K562 (cell line): ENCODE measurements at regions of chr12 and their contacts with region 1.

Region 1: GRCh38 chr12:110600254-110600653 is 13.7 kb upstream of the TCTN1 start:
- DNase-seq: peak in 2 of 4 experiments; percentile 46 to 56
- ATAC-seq: peak; percentile 59
- H3K4me3 ChIP-seq: no peak overlapping the region
- H3K27ac ChIP-seq: no peak overlapping the region
- H3K4me1 ChIP-seq: no peaks in the 10 kb centered on the region
- H3K27me3 ChIP-seq: no peaks in the 10 kb centered on the region
- CTCF ChIP-seq: peak; percentile 41 to 80 (median 43); a peak in 5 of 6 replicates
- EP300 ChIP-seq: no peak
- POLR2A ChIP-seq: no peak
- RAD21 ChIP-seq: peak; percentile 86 to 94

Region 2: DNA sequence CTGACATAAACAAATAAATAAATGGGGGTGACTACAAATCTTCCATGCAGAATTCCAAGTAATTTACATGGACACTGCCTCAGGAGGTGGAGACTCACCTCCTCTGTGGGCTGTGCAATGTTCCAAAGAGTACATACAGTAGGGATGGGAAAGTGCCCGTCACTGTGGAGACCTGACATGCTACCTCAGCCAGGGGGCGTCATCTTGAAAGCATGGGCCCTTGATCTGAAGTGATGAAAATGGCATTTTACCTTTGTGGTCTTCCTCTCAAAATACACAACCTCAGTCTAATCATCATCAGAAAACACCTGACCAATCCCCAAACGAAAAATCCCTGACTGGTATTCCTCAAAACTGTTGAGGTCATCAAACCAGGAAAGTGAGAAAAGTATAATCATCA is 245.2 kb before region 1 on chr12:
- CTCF ChIA-PET with region 1: no interaction called
- POLR2A ChIA-PET with region 1: no interaction called
- in situ Hi-C with region 1: no loop called
- intact Hi-C with region 1: loop called (anchors 5 kb)
- DNase-seq: peak; percentile 58 to 65 (median 61)
- ATAC-seq: peak; percentile 80
- H3K4me3 ChIP-seq: no peak overlapping the region
- H3K27ac ChIP-seq: no peak overlapping the region
- H3K4me1 ChIP-seq: peaks cover 8 to 21% of the 10 kb centered on the region in 2 experiments; a peak in 4 of 5 replicates
- H3K27me3 ChIP-seq: no peaks in the 10 kb centered on the region
- CTCF ChIP-seq: peak; percentile 61 to 71 (median 66)
- EP300 ChIP-seq: no peak
- POLR2A ChIP-seq: no peak
- RAD21 ChIP-seq: peak in 1 of 2 experiments; percentile 66; a peak in 3 of 4 replicates

Region 3: DNA sequence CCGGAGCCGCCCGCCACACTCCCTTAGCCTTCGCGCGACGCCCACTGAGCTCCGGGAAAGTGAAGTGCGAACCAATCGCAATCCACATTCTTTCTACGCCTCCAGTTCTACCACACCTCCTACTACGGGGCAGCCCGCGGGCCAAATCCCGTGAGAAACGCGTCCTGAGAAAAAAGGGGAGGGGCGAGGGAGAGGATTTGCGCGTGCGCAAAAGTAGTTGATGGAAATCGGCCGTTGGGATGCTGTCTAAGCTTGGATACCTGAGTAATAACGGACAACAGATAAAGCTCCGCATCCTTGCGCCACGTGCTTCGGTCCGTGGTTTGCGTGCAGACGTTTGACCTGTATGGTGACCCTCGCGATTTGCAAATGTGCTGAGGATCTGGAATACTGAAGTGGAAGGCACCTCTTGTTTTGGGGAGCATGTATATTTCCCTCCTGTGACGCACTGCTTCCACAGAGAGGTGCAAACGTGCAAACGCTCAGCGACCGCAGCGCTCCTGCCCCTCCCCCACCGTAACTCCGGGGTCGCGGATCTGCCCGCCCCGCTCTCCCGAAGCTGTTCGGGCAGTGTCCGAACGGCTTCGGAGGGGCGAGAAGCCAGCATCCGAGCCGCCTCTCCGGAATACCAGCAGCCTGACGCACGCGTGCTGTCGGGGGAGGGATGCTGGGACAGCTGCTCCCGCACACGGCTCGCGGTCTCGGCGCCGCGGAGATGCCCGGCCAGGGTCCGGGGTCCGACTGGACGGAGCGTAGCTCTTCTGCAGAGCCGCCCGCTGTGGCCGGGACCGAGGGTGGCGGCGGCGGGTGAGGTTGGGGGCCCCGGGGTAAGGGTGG is 131.8 kb before region 1 on chr12 and contains the starts of genes FAM216A and GPN3:
- CTCF ChIA-PET with region 1: interaction called, 15 read pairs
- POLR2A ChIA-PET with region 1: interaction called, 5 read pairs
- in situ Hi-C with region 1: loop called (anchors 5 kb)
- intact Hi-C with region 1: loop called (anchors 1 kb)
- DNase-seq: peak; percentile 89 to 99 (median 93)
- ATAC-seq: peak; percentile 89
- H3K4me3 ChIP-seq: peak within 1 kb of the TSS; percentile 59
- H3K27ac ChIP-seq: peak within 1 kb of the TSS; percentile 97
- H3K4me1 ChIP-seq: peaks cover 25 to 30% of the 10 kb centered on the region in 2 experiments; a peak in 4 of 5 replicates
- H3K27me3 ChIP-seq: no peaks in the 10 kb centered on the region
- CTCF ChIP-seq: no peak; a peak in 1 of 6 replicates
- EP300 ChIP-seq: peak; percentile 83
- POLR2A ChIP-seq: peak; percentile 79
- RAD21 ChIP-seq: no peak; a peak in 1 of 4 replicates
- polyA plus RNA-seq, gene FAM216A: 17.2 to 30.1 TPM
- polyA plus RNA-seq, gene GPN3: 105 to 123 TPM

Region 4: GRCh38 chr12:110555577-110556406 is 44.5 kb before region 1 on chr12:
- CTCF ChIA-PET with region 1: interaction called, 15 read pairs
- POLR2A ChIA-PET with region 1: no interaction called
- in situ Hi-C with region 1: no loop called
- intact Hi-C with region 1: loop called (anchors 1 kb)
- DNase-seq: no peak
- ATAC-seq: no peak
- H3K4me3 ChIP-seq: no peak overlapping the region
- H3K27ac ChIP-seq: no peak overlapping the region
- H3K4me1 ChIP-seq: peaks cover 0 to 12% of the 10 kb centered on the region in 2 experiments; a peak in 3 of 5 replicates
- H3K27me3 ChIP-seq: no peaks in the 10 kb centered on the region
- CTCF ChIP-seq: no peak
- EP300 ChIP-seq: no peak
- POLR2A ChIP-seq: no peak
- RAD21 ChIP-seq: no peak

Region 5: GRCh38 chr12:110698171-110698902 is 98.1 kb after region 1 on chr12:
- CTCF ChIA-PET with region 1: no interaction called
- POLR2A ChIA-PET with region 1: no interaction called
- in situ Hi-C with region 1: no loop called
- intact Hi-C with region 1: loop called (anchors 2 kb)
- DNase-seq: peak; percentile 77 to 92 (median 78)
- ATAC-seq: peak; percentile 97
- H3K4me3 ChIP-seq: peak overlapping the region; percentile 10; the same call in 1 of the 2 replicates
- H3K27ac ChIP-seq: peak overlapping the region; percentile 72
- H3K4me1 ChIP-seq: peaks cover 35 to 42% of the 10 kb centered on the region in 2 experiments
- H3K27me3 ChIP-seq: no peaks in the 10 kb centered on the region
- CTCF ChIP-seq: peak; percentile 93 to 98 (median 96)
- EP300 ChIP-seq: peak; percentile 39; the same call in 1 of the 2 replicates
- POLR2A ChIP-seq: no peak; the same call in 1 of the 2 replicates
- RAD21 ChIP-seq: peak; percentile 86 to 88